ENCODE measurements at regions of chr4 and their contacts with region 1.

Region 1: DNA sequence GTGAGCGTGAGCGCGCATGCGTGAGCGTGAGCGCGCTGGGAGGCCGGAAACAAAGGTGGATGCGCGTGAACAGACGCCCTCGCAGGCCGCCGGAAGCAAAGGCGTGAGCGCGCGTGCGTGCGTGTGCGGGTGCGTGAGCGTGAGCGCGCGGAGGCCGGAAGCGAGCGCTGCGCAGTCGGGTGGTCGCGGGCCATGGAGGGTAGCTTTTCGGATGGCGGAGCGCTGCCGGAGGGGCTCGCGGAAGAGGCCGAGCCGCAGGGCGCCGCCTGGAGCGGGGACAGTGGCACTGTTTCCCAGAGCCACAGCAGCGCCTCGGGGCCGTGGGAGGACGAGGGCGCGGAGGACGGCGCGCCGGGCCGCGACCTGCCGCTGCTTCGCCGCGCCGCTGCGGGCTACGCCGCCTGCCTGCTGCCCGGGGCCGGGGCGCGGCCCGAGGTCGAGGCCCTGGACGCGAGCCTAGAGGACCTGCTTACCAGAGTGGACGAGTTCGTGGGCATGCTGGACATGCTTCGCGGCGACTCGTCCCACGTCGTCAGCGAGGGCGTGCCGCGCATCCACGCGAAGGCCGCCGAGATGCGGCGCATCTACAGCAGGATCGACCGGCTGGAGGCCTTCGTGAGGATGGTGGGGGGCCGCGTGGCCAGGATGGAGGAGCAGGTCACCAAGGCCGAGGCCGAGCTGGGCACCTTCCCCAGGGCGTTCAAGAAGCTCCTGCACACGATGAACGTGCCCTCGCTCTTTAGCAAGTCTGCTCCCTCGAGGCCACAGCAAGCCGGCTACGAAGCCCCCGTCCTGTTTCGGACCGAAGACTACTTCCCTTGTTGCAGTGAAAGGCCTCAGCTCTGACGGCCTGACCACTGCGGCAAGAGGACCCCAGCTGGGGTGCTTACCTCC is at the start of gene BLOC1S4:
- DNase-seq: peak; percentile 86 to 94 (median 93)
- H3K4me3 ChIP-seq: peak within 1 kb of the TSS; percentile 38 to 84
- H3K4me3 Mint-ChIP-seq: peak within 1 kb of the TSS; percentile 87 to 99 (median 93)
- H3K27ac ChIP-seq: peak within 1 kb of the TSS; percentile 92
- H3K27ac Mint-ChIP-seq: peak within 1 kb of the TSS; percentile 92 to 99 (median 98)
- H3K4me1 ChIP-seq: peaks cover 38% of the 10 kb centered on the region
- H3K4me1 Mint-ChIP-seq: peaks cover 25 to 48% (median 35%) of the 10 kb centered on the region in 4 donors
- H3K27me3 ChIP-seq: no peaks in the 10 kb centered on the region
- H3K27me3 Mint-ChIP-seq: no peaks in the 10 kb centered on the region
- total RNA-seq, gene BLOC1S4: 35.3 to 37.8 TPM

Region 2: DNA sequence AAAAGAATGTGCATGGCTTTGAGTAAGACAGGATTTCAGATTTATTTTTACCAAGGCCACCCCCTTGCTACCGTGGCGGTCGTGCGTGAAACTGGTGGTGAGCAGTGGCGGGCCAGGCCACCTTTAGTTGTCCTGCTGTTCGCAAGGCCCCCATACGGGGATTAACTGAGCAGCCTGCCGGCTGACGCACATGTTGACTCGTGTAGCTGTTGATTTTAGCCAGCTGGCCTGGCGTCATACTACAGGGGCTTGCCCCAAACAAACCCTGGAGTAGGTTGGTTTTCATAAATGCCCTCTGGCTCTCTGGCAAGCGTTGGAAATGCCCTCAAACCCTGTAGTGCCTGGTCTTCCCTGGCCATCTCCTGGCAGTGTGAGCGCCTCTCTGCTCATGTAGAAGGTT is 418.2 kb before region 1 on chr4:
- CTCF ChIA-PET with region 1: no interaction called
- POLR2A ChIA-PET with region 1: no interaction called
- intact Hi-C with region 1: no loop called
- DNase-seq: no peak
- H3K4me3 ChIP-seq: no peak overlapping the region
- H3K4me3 Mint-ChIP-seq: no peak overlapping the region
- H3K27ac ChIP-seq: no peak overlapping the region
- H3K27ac Mint-ChIP-seq: no peak overlapping the region
- H3K4me1 ChIP-seq: no peaks in the 10 kb centered on the region
- H3K4me1 Mint-ChIP-seq: peaks cover 0 to 1% (median 0%) of the 10 kb centered on the region in 4 donors
- H3K27me3 ChIP-seq: no peaks in the 10 kb centered on the region
- H3K27me3 Mint-ChIP-seq: no peaks in the 10 kb centered on the region

Region 3: DNA sequence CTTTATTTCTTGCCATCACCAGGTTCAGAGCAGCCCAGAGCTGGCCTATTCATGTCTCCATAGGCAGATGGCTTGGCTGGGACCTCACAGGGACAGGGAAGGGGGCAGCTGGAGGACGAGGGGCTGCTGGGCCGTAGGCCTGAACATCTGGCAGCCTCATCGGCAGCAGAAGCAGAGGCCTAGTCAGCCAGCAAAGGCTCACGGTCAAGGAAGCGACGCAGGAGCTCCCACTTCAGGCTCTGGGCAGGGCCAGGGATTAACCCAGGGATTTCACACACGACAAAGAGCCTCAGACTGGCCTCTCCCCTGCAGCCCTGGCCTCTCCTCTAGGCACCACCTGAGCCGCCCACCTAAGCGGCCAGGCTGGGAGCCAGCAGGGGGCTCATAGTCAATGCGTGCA is 187.2 kb before region 1 on chr4:
- CTCF ChIA-PET with region 1: no interaction called
- POLR2A ChIA-PET with region 1: no interaction called
- intact Hi-C with region 1: no loop called
- DNase-seq: no peak
- H3K4me3 ChIP-seq: no peak overlapping the region
- H3K4me3 Mint-ChIP-seq: no peak overlapping the region
- H3K27ac ChIP-seq: no peak overlapping the region
- H3K27ac Mint-ChIP-seq: no peak overlapping the region
- H3K4me1 ChIP-seq: no peaks in the 10 kb centered on the region
- H3K4me1 Mint-ChIP-seq: no peaks in the 10 kb centered on the region
- H3K27me3 ChIP-seq: no peaks in the 10 kb centered on the region
- H3K27me3 Mint-ChIP-seq: peaks cover 0 to 10% of the 10 kb centered on the region in 2 donors

Region 4: GRCh38 chr4:6663596-6664393 is 52.5 kb before region 1 on chr4:
- CTCF ChIA-PET with region 1: interaction called, 5 read pairs
- POLR2A ChIA-PET with region 1: interaction called, 11 read pairs
- intact Hi-C with region 1: no loop called
- DNase-seq: no peak
- H3K4me3 ChIP-seq: peak overlapping the region in 1 of 2 donors; percentile 19
- H3K4me3 Mint-ChIP-seq: peak overlapping the region in 6 of 8 donors; percentile 6 to 72 (median 45)
- H3K27ac ChIP-seq: no peak overlapping the region
- H3K27ac Mint-ChIP-seq: no peak overlapping the region
- H3K4me1 ChIP-seq: peaks cover 19% of the 10 kb centered on the region
- H3K4me1 Mint-ChIP-seq: peaks cover 0 to 15% (median 7%) of the 10 kb centered on the region in 4 donors
- H3K27me3 ChIP-seq: no peaks in the 10 kb centered on the region
- H3K27me3 Mint-ChIP-seq: no peaks in the 10 kb centered on the region

Region 5: DNA sequence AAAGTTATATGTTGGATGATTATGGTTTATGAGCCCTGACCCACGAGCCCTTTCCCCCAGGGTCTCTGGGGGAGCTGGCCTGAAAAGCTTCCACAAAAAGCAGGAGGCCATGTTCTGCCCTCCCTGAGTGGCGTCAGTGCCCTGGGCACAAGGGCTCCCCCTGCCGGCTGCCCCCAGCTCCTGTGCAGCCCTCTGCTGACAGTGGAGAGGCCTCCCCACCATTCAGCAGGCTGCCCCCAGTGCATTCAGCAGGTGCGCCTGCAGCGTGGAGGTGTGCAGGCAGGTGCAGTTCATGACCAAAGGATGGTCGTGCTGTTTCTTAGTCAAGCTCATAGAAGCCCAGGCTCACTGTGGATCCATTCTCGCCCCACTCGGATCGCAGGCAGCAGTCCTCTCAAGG is 35.1 kb before region 1 on chr4:
- CTCF ChIA-PET with region 1: interaction called, 115 read pairs
- POLR2A ChIA-PET with region 1: interaction called, 1,401 read pairs
- intact Hi-C with region 1: no loop called
- DNase-seq: no peak
- H3K4me3 ChIP-seq: no peak overlapping the region
- H3K4me3 Mint-ChIP-seq: no peak overlapping the region
- H3K27ac ChIP-seq: no peak overlapping the region
- H3K27ac Mint-ChIP-seq: peak overlapping the region in 2 of 7 donors; percentile 22 to 35
- H3K4me1 ChIP-seq: peaks cover 21% of the 10 kb centered on the region
- H3K4me1 Mint-ChIP-seq: peaks cover 38 to 77% (median 46%) of the 10 kb centered on the region in 4 donors
- H3K27me3 ChIP-seq: no peaks in the 10 kb centered on the region
- H3K27me3 Mint-ChIP-seq: no peaks in the 10 kb centered on the region

Region 6: GRCh38 chr4:6695660-6696630 is 20.3 kb before region 1 on chr4:
- CTCF ChIA-PET with region 1: interaction called, 21 read pairs
- POLR2A ChIA-PET with region 1: interaction called, 663 read pairs
- intact Hi-C with region 1: no loop called
- DNase-seq: peak; percentile 78 to 89 (median 81)
- H3K4me3 ChIP-seq: no peak overlapping the region
- H3K4me3 Mint-ChIP-seq: peak overlapping the region; percentile 33 to 85 (median 71)
- H3K27ac ChIP-seq: peak overlapping the region; percentile 81
- H3K27ac Mint-ChIP-seq: peak overlapping the region; percentile 89 to 96 (median 92)
- H3K4me1 ChIP-seq: peaks cover 98% of the 10 kb centered on the region
- H3K4me1 Mint-ChIP-seq: peaks cover 59 to 92% (median 78%) of the 10 kb centered on the region in 4 donors
- H3K27me3 ChIP-seq: no peaks in the 10 kb centered on the region
- H3K27me3 Mint-ChIP-seq: no peaks in the 10 kb centered on the region

Region 7: GRCh38 chr4:6783053-6783981 is 67.1 kb after region 1 on chr4:
- CTCF ChIA-PET with region 1: interaction called, 3 read pairs
- POLR2A ChIA-PET with region 1: interaction called, 14 read pairs
- intact Hi-C with region 1: loop called (anchors 1 kb)
- DNase-seq: peak; percentile 87 to 89 (median 88)
- H3K4me3 ChIP-seq: peak overlapping the region; percentile 38 to 71
- H3K4me3 Mint-ChIP-seq: peak overlapping the region; percentile 84 to 92 (median 88)
- H3K27ac ChIP-seq: peak overlapping the region; percentile 96
- H3K27ac Mint-ChIP-seq: peak overlapping the region; percentile 88 to 93 (median 91)
- H3K4me1 ChIP-seq: peaks cover 44% of the 10 kb centered on the region
- H3K4me1 Mint-ChIP-seq: peaks cover 32 to 61% (median 47%) of the 10 kb centered on the region in 4 donors
- H3K27me3 ChIP-seq: no peaks in the 10 kb centered on the region
- H3K27me3 Mint-ChIP-seq: no peaks in the 10 kb centered on the region

Region 8: GRCh38 chr4:7042697-7043464 is 326.6 kb after region 1 on chr4 and contains the start of gene TADA2B:
- CTCF ChIA-PET with region 1: interaction called, 4 read pairs
- POLR2A ChIA-PET with region 1: interaction called, 3 read pairs
- intact Hi-C with region 1: loop called (anchors 1 kb)
- DNase-seq: peak; percentile 90 to 94 (median 91)
- H3K4me3 ChIP-seq: peak within 1 kb of the TSS; percentile 83 to 91
- H3K4me3 Mint-ChIP-seq: peak within 1 kb of the TSS; percentile 89 to 97 (median 93)
- H3K27ac ChIP-seq: peak within 1 kb of the TSS; percentile 75
- H3K27ac Mint-ChIP-seq: peak within 1 kb of the TSS; percentile 81 to 95 (median 91)
- H3K4me1 ChIP-seq: peaks cover 45% of the 10 kb centered on the region
- H3K4me1 Mint-ChIP-seq: peaks cover 33 to 61% (median 40%) of the 10 kb centered on the region in 4 donors
- H3K27me3 ChIP-seq: no peaks in the 10 kb centered on the region
- H3K27me3 Mint-ChIP-seq: no peaks in the 10 kb centered on the region
- total RNA-seq, gene TADA2B: 46.4 to 49.0 TPM

Measured in CD4-positive, alpha-beta memory T cell (primary cell).